Pancreas (tissue), 10 donors: ENCODE measurements at regions of chr9 and their contacts with region 1.

Region 1: GRCh38 chr9:114653556-114654159 is 3.9 kb downstream of the TEX53 start:
- DNase-seq: peak in 5 of 6 donors; percentile 51 to 80 (median 67)
- ATAC-seq: peak; percentile 73 to 99 (median 93)
- H3K4me3 ChIP-seq: no peak overlapping the region
- H3K27ac ChIP-seq: no peak overlapping the region
- H3K4me1 ChIP-seq: no peaks in the 10 kb centered on the region
- H3K27me3 ChIP-seq: no peaks in the 10 kb centered on the region
- CTCF ChIP-seq: peak; percentile 63 to 80 (median 75)

Region 2: DNA sequence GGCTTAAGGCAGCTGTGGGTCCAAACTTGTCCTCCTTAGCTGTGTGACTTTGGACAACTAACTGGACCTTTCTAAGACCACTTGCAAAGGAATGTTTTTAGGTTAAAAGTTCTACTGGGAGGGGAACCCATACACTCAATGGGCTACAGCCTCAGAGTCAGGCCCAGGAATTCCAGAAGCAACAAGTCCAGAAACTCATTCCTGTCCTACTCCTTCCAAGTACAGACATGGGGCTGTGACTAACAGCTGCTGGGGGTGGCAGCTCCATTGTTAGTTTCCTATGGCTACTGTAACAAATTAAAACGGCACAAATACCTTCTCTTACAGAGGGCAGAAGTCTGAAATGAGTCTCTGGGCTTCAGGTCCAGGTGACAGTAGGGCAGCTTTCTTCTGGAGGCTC is 253.4 kb before region 1 on chr9:
- intact Hi-C with region 1: loop called in 2 of 3 experiments (anchors 5 kb)
- DNase-seq: no peak
- ATAC-seq: no peak
- H3K4me3 ChIP-seq: no peak overlapping the region
- H3K27ac ChIP-seq: no peak overlapping the region
- H3K4me1 ChIP-seq: peaks cover 0 to 4% (median 0%) of the 10 kb centered on the region in 3 donors
- H3K27me3 ChIP-seq: no peaks in the 10 kb centered on the region
- CTCF ChIP-seq: no peak

Region 3: DNA sequence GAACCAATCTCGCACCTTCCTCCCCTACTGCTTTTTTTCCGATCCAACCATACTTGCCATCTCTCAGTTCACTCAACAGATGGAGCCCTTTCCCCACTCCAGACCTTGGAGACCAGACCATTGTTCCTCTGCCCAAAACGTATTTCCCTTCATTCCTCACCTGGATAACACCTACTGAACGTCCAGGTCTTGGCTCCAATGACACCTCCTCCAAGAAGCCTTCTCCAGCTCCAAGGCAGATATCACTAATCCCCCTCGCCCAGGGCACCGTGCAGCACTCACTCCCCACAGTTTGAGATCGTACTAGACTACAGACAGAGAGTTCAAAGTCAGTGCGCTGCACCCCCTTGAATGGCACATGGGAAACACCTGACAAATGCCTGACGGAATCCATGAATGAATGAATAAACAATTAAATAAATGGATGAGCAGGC is 218.8 kb before region 1 on chr9:
- intact Hi-C with region 1: loop called in 1 of 3 experiments (anchors 10 kb)
- DNase-seq: peak in 1 of 6 donors; percentile 32
- ATAC-seq: peak; percentile 64 to 88 (median 84)
- H3K4me3 ChIP-seq: no peak overlapping the region
- H3K27ac ChIP-seq: no peak overlapping the region
- H3K4me1 ChIP-seq: no peaks in the 10 kb centered on the region
- H3K27me3 ChIP-seq: no peaks in the 10 kb centered on the region
- CTCF ChIP-seq: peak in 3 of 4 donors; percentile 21 to 39 (median 24)

Region 4: DNA sequence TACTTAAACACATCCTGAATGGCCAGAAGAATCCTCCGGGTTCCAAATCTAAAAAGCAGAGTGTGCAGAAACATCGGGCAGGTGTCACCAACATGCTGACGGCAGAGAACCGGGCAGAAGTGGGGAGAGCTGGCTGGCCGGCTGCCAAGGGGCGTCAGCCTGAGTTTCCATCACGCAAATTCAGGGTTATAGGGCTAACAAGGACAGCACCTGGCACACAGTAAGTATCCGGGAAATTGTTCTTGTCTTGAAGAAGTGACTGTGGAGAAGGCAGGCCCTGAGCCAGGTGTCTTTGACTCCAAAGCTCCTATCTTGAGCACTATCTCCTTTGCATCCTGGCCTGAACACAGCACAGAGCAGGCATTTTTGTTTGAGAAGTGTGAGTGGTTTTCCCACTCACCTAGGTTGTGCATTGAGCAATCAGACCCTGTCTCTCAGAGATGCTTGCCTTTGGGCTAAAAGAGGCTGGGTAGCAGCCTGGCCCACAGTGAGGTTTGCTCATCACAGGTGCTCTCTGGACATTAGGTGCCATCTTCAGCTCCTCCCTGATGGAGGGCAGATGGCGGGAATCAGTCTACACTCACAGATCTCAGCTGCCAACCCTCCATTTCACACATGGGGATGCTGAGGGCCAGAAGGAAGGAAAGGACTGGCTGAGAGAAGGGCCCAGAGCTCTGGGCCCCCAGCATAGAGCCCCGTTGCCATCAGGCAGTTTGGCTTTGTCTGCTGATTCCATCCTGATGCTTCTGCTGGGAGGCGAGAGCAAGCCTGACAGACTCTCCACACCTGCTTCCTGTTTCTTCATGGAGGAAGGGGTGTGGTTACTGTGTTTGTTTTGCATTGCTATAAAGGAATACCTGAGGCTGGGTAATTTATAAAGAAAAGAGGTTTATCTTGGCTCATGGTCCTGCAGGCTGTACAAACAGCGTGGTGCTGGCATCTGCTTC is 201.2 kb before region 1 on chr9:
- intact Hi-C with region 1: no loop called
- DNase-seq: peak in 1 of 6 donors; percentile 34
- ATAC-seq: peak in 3 of 4 donors; percentile 35 to 62 (median 52)
- H3K4me3 ChIP-seq: no peak overlapping the region
- H3K27ac ChIP-seq: no peak overlapping the region
- H3K4me1 ChIP-seq: no peaks in the 10 kb centered on the region
- H3K27me3 ChIP-seq: no peaks in the 10 kb centered on the region
- CTCF ChIP-seq: no peak